H1 (cell line): ENCODE measurements at regions of chr6 and their contacts with region 1.

Region 1: DNA sequence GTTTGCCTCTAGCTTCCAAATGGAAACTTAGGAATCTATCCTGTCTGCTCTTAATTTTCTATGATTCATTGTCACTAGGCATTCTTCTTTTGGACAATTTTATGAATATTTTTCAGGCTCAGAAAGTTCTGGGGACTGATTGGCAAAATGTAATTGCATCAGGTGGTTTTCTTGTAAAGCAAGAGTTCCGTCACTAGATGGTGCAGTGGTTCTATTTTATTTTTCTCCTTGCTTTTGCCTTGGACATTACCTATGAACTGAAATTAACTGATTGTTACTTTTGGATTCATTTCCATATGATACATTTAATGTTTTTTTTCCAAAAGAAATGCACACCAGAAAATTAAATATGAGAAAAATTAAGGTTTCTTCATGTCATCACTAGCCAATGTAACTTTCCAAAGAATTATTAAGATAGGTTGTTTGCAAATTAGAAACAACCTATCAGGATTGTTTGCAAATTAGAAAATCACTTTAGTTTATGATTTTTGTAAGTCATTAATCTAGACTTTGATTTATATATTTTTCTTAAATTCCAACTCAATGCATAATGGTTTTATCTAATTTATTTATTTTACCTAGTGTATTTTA is 48.0 kb downstream of the TMEM170B start:
- DNase-seq: no peak
- H3K4me3 ChIP-seq: no peak overlapping the region
- H3K27ac ChIP-seq: no peak overlapping the region
- H3K4me1 ChIP-seq: peaks cover 0 to 7% (median 2%) of the 10 kb centered on the region in 4 experiments; a peak in 3 of 7 replicates
- H3K27me3 ChIP-seq: no peaks in the 10 kb centered on the region
- CTCF ChIP-seq: peak in 2 of 3 experiments; percentile 32 to 51; a peak in 2 of 4 replicates
- EP300 ChIP-seq: no peak
- POLR2A ChIP-seq: no peak
- RAD21 ChIP-seq: peak; percentile 75 to 79

Region 2: GRCh38 chr6:11509471-11509870 is 76.0 kb before region 1 on chr6:
- CTCF ChIA-PET with region 1: no interaction called
- POLR2A ChIA-PET with region 1: no interaction called
- DNase-seq: no peak
- H3K4me3 ChIP-seq: no peak overlapping the region
- H3K27ac ChIP-seq: no peak overlapping the region
- H3K4me1 ChIP-seq: no peaks in the 10 kb centered on the region
- H3K27me3 ChIP-seq: no peaks in the 10 kb centered on the region
- CTCF ChIP-seq: no peak
- EP300 ChIP-seq: no peak
- POLR2A ChIP-seq: no peak
- RAD21 ChIP-seq: no peak

Region 3: DNA sequence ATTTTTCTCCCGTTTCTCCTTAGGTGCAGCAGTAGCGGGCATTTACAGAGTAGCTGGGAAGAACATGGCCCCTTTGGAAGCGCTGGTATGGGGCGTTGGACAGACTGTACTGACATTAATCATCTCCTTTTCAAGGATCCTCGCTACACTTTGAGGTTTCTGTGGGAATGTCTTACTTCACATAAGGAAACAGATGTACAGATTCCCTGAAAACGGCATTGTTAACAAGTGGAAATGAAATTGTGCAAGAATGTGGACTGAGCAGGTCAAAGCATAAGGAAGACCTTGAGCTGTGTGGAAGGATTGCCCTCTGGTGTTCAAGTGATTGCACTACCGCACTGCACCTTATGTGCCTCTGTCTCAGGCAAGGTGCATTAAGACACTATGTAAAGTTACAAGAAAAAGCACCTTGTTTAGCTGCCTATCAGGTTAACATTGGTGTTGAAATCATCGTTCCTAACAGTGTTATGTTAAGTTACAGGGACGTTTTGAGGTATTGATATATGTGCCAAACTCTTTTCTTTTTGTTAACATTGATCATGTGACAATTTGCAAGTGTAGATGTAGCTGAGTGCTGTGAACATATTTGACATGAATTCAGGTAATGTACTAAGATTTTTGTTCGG is 10.0 kb before region 1 on chr6:
- CTCF ChIA-PET with region 1: interaction called, 13 read pairs
- POLR2A ChIA-PET with region 1: no interaction called
- DNase-seq: peak; percentile 41 to 56
- H3K4me3 ChIP-seq: no peak overlapping the region
- H3K27ac ChIP-seq: no peak overlapping the region
- H3K4me1 ChIP-seq: no peaks in the 10 kb centered on the region
- H3K27me3 ChIP-seq: no peaks in the 10 kb centered on the region
- CTCF ChIP-seq: peak; percentile 72 to 97 (median 81)
- EP300 ChIP-seq: no peak
- POLR2A ChIP-seq: no peak
- RAD21 ChIP-seq: peak; percentile 92 to 94

Region 4: DNA sequence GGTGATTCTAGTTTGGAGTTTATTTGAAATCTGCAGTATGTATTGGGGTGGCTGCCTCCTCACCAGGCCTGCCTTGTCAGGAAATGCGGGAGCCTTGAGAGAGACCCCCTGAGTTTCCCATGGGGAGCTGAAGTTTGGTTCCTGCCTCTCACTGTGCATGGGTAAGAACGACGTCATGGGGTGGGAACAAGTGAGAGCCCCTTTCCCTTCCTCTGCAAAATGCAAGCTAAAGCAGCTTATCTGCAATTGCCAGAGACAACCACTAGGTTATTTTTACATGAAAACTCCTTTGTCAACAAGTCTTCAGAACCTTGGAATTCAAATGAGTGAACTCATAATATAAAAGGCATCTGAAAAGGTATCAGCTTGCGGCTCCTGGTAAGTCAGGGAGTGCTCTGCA is 10.4 kb after region 1 on chr6:
- CTCF ChIA-PET with region 1: interaction called, 18 read pairs
- POLR2A ChIA-PET with region 1: no interaction called
- DNase-seq: no peak
- H3K4me3 ChIP-seq: no peak overlapping the region
- H3K27ac ChIP-seq: no peak overlapping the region; the same call in 1 of the 2 replicates
- H3K4me1 ChIP-seq: peaks cover 0 to 2% (median 0%) of the 10 kb centered on the region in 4 experiments; a peak in 1 of 7 replicates
- H3K27me3 ChIP-seq: no peaks in the 10 kb centered on the region
- CTCF ChIP-seq: peak in 2 of 3 experiments; percentile 35 to 59; a peak in 2 of 4 replicates
- EP300 ChIP-seq: no peak
- POLR2A ChIP-seq: no peak
- RAD21 ChIP-seq: peak in 1 of 2 experiments; percentile 31; a peak in 3 of 4 replicates

Region 5: DNA sequence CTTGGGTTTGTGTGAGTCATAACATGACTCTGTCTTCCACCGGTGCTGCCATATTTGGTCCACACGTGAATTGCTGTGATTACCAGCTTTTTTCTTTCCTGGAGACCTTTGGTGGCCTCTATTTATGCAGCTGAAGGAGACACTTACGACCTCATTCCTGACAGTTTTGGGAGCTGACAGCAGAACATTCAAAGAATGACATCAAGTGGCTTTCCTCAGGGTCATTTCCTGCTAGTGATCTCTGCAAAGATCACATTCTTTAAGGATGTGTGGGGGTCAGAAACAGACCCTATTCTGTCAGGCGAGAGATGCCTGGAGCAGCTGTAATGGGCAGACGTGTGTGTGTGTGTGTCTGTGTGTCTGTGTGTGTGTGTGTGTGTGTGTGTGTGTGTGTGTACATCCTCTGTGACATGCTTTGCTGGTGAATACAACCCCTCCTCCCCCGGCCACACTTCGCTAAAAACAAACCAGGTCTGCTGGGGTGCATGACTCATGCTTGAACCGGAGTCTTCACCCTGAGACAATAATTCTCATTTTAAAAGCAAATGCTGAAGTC is 67.6 kb after region 1 on chr6:
- CTCF ChIA-PET with region 1: interaction called, 25 read pairs
- POLR2A ChIA-PET with region 1: no interaction called
- DNase-seq: peak in 1 of 2 experiments; percentile 29
- H3K4me3 ChIP-seq: no peak overlapping the region
- H3K27ac ChIP-seq: no peak overlapping the region
- H3K4me1 ChIP-seq: peaks cover 8 to 35% (median 19%) of the 10 kb centered on the region in 4 experiments; a peak in 6 of 7 replicates
- H3K27me3 ChIP-seq: no peaks in the 10 kb centered on the region; a peak in 1 of 7 replicates
- CTCF ChIP-seq: no peak
- EP300 ChIP-seq: no peak
- POLR2A ChIP-seq: no peak
- RAD21 ChIP-seq: no peak

Region 6: GRCh38 chr6:12605888-12606345 is 1020.4 kb after region 1 on chr6:
- CTCF ChIA-PET with region 1: interaction called, 10 read pairs
- POLR2A ChIA-PET with region 1: no interaction called
- DNase-seq: peak in 1 of 2 experiments; percentile 55
- H3K4me3 ChIP-seq: no peak overlapping the region
- H3K27ac ChIP-seq: no peak overlapping the region
- H3K4me1 ChIP-seq: peaks cover 0 to 6% (median 1%) of the 10 kb centered on the region in 4 experiments; a peak in 2 of 7 replicates
- H3K27me3 ChIP-seq: no peaks in the 10 kb centered on the region
- CTCF ChIP-seq: peak in 2 of 3 experiments; percentile 75 to 81; a peak in 3 of 4 replicates
- EP300 ChIP-seq: no peak
- POLR2A ChIP-seq: no peak
- RAD21 ChIP-seq: peak; percentile 93